ENCODE measurements at regions of chrX and their contacts with region 1.

Region 1: DNA sequence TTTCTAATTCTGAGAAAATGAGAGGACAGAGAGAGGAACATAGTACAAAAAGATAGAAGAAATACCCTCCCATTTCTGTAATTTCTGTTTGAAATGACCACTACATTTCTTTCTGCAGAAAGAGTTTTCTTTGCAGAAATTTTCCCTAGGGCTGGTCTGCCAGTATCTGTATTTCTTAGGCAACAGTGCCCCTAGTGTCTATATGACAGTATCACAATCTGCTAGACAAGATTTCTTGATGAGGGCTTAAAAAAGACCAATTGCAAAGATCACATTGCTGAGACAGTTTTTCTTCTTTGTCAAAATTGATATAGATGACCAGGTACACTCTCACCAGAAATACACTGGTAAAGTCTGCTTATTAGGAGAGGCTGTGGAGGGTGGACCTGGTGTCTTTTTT is 81.0 kb upstream of the ZDHHC15 start:
- DNase-seq: peak in 6 of 9 donors; percentile 4 to 47 (median 32)
- ATAC-seq: no peak
- H3K4me3 ChIP-seq: no peak overlapping the region
- H3K4me3 Mint-ChIP-seq: no peak overlapping the region
- H3K27ac ChIP-seq: no peak overlapping the region
- H3K27ac Mint-ChIP-seq: no peak overlapping the region
- H3K4me1 ChIP-seq: no peaks in the 10 kb centered on the region
- H3K4me1 Mint-ChIP-seq: no peaks in the 10 kb centered on the region
- H3K27me3 ChIP-seq: no peaks in the 10 kb centered on the region
- H3K27me3 Mint-ChIP-seq: no peaks in the 10 kb centered on the region

Region 2: GRCh38 chrX:74382613-74383012 is 1221.2 kb before region 1 on chrX:
- CTCF ChIA-PET with region 1: no interaction called
- POLR2A ChIA-PET with region 1: no interaction called
- intact Hi-C with region 1: loop called in 1 of 2 experiments (anchors 5 kb)
- DNase-seq: peak; percentile 11 to 50 (median 30)
- ATAC-seq: peak; percentile 82
- H3K4me3 ChIP-seq: no peak overlapping the region
- H3K4me3 Mint-ChIP-seq: no peak overlapping the region
- H3K27ac ChIP-seq: no peak overlapping the region
- H3K27ac Mint-ChIP-seq: no peak overlapping the region
- H3K4me1 ChIP-seq: no peaks in the 10 kb centered on the region
- H3K4me1 Mint-ChIP-seq: no peaks in the 10 kb centered on the region
- H3K27me3 ChIP-seq: no peaks in the 10 kb centered on the region
- H3K27me3 Mint-ChIP-seq: peaks cover 0 to 6% (median 5%) of the 10 kb centered on the region in 5 donors

Region 3: DNA sequence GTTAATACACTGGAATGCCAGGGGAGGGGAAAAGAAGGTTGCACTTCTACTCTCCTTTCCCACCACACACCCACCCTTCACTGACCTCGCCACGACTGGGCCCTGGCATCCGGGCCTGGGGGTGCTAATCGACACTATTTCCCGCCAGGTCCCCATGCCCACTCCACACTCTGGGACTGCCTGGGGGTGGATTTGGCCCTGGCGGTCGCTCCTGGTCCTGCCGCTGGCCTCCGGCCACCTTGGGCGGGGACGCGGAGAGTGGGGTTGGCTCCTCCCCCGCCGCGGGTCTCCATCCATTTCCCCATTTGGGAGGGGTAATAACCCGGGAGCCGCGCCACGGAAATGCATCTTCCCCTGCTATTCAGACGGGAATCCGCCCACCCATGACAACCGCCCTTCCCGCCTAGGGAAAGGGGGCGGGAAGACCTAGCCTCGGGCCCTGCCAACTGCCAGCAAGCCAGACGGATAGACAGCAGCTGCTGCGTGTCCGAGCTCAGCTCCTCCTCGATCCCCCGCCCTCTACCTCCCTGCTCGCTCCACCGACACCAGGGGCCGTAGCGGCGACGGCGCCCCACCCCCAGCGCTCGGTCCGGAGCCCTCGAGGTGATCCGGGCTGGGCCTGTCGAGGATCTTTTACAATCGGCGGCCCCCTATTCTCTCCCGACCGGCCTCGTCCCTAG is 1067.5 kb before region 1 on chrX:
- CTCF ChIA-PET with region 1: no interaction called
- POLR2A ChIA-PET with region 1: no interaction called
- intact Hi-C with region 1: loop called in 1 of 2 experiments (anchors 5 kb)
- DNase-seq: peak in 6 of 9 donors; percentile 6 to 35 (median 12)
- ATAC-seq: peak; percentile 73
- H3K4me3 ChIP-seq: peak overlapping the region; percentile 63
- H3K4me3 Mint-ChIP-seq: peak overlapping the region; percentile 75 to 89 (median 85)
- H3K27ac ChIP-seq: peak overlapping the region; percentile 54
- H3K27ac Mint-ChIP-seq: peak overlapping the region in 8 of 9 donors; percentile 51 to 80 (median 68)
- H3K4me1 ChIP-seq: peaks cover 0 to 3% of the 10 kb centered on the region in 2 donors
- H3K4me1 Mint-ChIP-seq: peaks cover 0 to 18% (median 7%) of the 10 kb centered on the region in 7 donors
- H3K27me3 ChIP-seq: no peaks in the 10 kb centered on the region
- H3K27me3 Mint-ChIP-seq: no peaks in the 10 kb centered on the region

Region 4: GRCh38 chrX:74603040-74603439 is 1000.8 kb before region 1 on chrX:
- CTCF ChIA-PET with region 1: interaction called, 10 read pairs
- POLR2A ChIA-PET with region 1: no interaction called
- intact Hi-C with region 1: no loop called
- DNase-seq: no peak
- ATAC-seq: no peak
- H3K4me3 ChIP-seq: no peak overlapping the region
- H3K4me3 Mint-ChIP-seq: peak overlapping the region in 1 of 10 donors; percentile 4
- H3K27ac ChIP-seq: no peak overlapping the region
- H3K27ac Mint-ChIP-seq: peak overlapping the region in 3 of 9 donors; percentile 57 to 72 (median 67)
- H3K4me1 ChIP-seq: peaks cover 7 to 8% of the 10 kb centered on the region in 2 donors
- H3K4me1 Mint-ChIP-seq: peaks cover 32 to 78% (median 68%) of the 10 kb centered on the region in 7 donors
- H3K27me3 ChIP-seq: no peaks in the 10 kb centered on the region
- H3K27me3 Mint-ChIP-seq: no peaks in the 10 kb centered on the region

Region 5: GRCh38 chrX:74924449-74925225 is 679.2 kb before region 1 on chrX:
- CTCF ChIA-PET with region 1: no interaction called
- POLR2A ChIA-PET with region 1: no interaction called
- intact Hi-C with region 1: loop called in 1 of 2 experiments (anchors 2 kb)
- DNase-seq: peak in 8 of 9 donors; percentile 10 to 45 (median 30)
- ATAC-seq: peak; percentile 77
- H3K4me3 ChIP-seq: peak overlapping the region; percentile 47
- H3K4me3 Mint-ChIP-seq: peak overlapping the region; percentile 80 to 97 (median 92)
- H3K27ac ChIP-seq: peak overlapping the region; percentile 53
- H3K27ac Mint-ChIP-seq: peak overlapping the region in 7 of 9 donors; percentile 59 to 96 (median 86)
- H3K4me1 ChIP-seq: no peaks in the 10 kb centered on the region
- H3K4me1 Mint-ChIP-seq: peaks cover 4 to 11% (median 7%) of the 10 kb centered on the region in 7 donors
- H3K27me3 ChIP-seq: no peaks in the 10 kb centered on the region
- H3K27me3 Mint-ChIP-seq: peaks cover 0 to 30% (median 7%) of the 10 kb centered on the region in 5 donors

Region 6: GRCh38 chrX:75156021-75156945 is 447.6 kb before region 1 on chrX and contains the start of gene ABCB7:
- CTCF ChIA-PET with region 1: no interaction called
- POLR2A ChIA-PET with region 1: no interaction called
- intact Hi-C with region 1: no loop called
- DNase-seq: peak; percentile 24 to 68 (median 59)
- ATAC-seq: peak; percentile 95
- H3K4me3 ChIP-seq: peak within 1 kb of the TSS; percentile 86
- H3K4me3 Mint-ChIP-seq: peak within 1 kb of the TSS; percentile 87 to 100 (median 95)
- H3K27ac ChIP-seq: peak within 1 kb of the TSS; percentile 75
- H3K27ac Mint-ChIP-seq: peak within 1 kb of the TSS; percentile 92 to 100 (median 96)
- H3K4me1 ChIP-seq: no peaks in the 10 kb centered on the region
- H3K4me1 Mint-ChIP-seq: peaks cover 10 to 63% (median 41%) of the 10 kb centered on the region in 7 donors
- H3K27me3 ChIP-seq: no peaks in the 10 kb centered on the region
- H3K27me3 Mint-ChIP-seq: no peaks in the 10 kb centered on the region
- total RNA-seq, gene ABCB7: 19.4 to 33.0 (median 26.3) TPM

Measured in naive thymus-derived CD4-positive, alpha-beta T cell (primary cell).